Mammary epithelial cell (primary cell): ENCODE measurements at regions of chrX and their contacts with region 1.

Region 1: DNA sequence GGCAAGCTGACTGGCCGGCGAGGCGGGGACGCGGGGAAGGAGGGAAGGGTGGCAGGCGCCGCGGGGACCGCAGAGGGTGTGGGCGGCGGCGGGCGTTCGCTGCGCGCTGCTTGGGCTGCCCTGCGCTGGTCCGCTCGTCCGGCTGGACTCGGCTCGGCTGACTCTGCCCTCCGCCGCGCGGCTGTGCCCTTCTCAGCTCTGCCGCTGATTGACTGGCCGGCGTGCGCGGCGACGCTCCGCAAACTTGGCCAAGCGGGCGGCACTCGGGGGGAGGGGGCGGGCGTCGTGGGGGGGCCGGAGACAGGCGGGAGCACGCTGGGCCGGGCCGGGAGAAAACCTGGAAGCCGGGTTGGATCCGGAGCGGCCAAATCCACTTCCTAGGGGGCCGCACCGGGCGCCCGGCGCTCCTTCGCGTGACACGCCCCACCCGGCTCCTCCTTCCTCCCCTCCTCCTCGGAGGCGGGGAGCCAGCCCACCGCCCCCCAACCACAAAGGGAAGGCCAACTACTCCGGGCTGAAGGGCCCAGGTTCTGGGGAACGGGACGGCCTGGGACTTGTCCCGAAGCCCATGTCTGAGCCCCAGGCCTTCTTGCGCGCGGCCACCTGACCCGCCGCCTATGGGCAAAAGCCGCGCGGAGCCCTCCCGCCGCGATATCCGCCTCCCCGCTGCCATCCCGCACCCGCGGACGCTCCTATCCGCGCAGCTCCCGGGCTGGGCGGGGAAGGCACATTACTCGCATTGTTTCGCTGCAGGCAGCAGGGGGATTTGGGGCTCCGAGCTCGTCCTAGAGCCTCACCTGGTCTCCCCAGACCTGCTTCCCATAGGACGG is at the start of gene GPC4:
- DNase-seq: peak; percentile 49
- H3K4me3 ChIP-seq: peak within 1 kb of the TSS; percentile 31 to 56 (median 55)
- H3K27ac ChIP-seq: no peak within 1 kb of the TSS
- H3K4me1 ChIP-seq: no peaks in the 10 kb centered on the region
- H3K27me3 ChIP-seq: peaks cover 10% of the 10 kb centered on the region
- CTCF ChIP-seq: no peak
- total RNA-seq, gene GPC4: 7.1 to 7.2 TPM

Region 2: DNA sequence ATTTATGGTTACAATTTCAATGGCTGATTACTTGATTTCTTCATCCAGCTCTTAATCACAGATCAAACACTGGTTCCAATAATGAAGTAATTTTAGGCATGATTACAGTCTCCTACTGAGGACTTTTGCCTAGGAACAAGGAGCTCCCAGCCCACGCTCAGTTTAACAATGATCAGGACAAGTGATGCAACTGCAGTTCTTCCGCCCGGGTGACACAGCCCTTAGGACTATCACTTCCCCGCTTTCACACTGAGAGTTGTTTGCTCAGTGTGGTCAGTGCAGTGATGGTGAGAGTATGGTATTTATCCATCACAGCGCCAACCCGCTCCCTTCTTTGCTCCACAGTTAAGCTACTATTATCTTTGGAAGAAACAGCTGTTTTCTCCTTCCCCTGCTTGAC is 723.4 kb before region 1 on chrX:
- CTCF ChIA-PET with region 1: no interaction called
- dilution Hi-C with region 1: no loop called
- in situ Hi-C with region 1: no loop called
- intact Hi-C with region 1: no loop called
- DNase-seq: no peak
- H3K4me3 ChIP-seq: no peak overlapping the region
- H3K27ac ChIP-seq: no peak overlapping the region
- H3K4me1 ChIP-seq: no peaks in the 10 kb centered on the region
- H3K27me3 ChIP-seq: no peaks in the 10 kb centered on the region
- CTCF ChIP-seq: no peak

Region 3: GRCh38 chrX:133444951-133445831 is 29.7 kb after region 1 on chrX:
- CTCF ChIA-PET with region 1: no interaction called
- dilution Hi-C with region 1: no loop called
- in situ Hi-C with region 1: no loop called
- intact Hi-C with region 1: loop called (anchors 1 kb)
- DNase-seq: peak; percentile 52
- H3K4me3 ChIP-seq: peak overlapping the region; percentile 14 to 29 (median 15)
- H3K27ac ChIP-seq: no peak overlapping the region
- H3K4me1 ChIP-seq: peaks cover 9% of the 10 kb centered on the region
- H3K27me3 ChIP-seq: no peaks in the 10 kb centered on the region
- CTCF ChIP-seq: no peak